IMR-90 (cell line): ENCODE measurements at regions of chr4 and their contacts with region 1.

Region 1: GRCh38 chr4:138919094-138919936 is 96.3 kb upstream of the NOCT start:
- DNase-seq: peak; percentile 82
- ATAC-seq: peak; percentile 100
- H3K4me3 ChIP-seq: no peak overlapping the region
- H3K27ac ChIP-seq: no peak overlapping the region
- H3K4me1 ChIP-seq: no peaks in the 10 kb centered on the region
- H3K27me3 ChIP-seq: peaks cover 2% of the 10 kb centered on the region; the same call in 1 of the 2 replicates
- CTCF ChIP-seq: peak; percentile 84
- POLR2A ChIP-seq: 0 out of 2 replicates have a peak, but pooled peaks have one; percentile 25
- RAD21 ChIP-seq: peak; percentile 93

Region 2: GRCh38 chr4:138090150-138090917 is 829.0 kb before region 1 on chr4:
- CTCF ChIA-PET with region 1: no interaction called
- POLR2A ChIA-PET with region 1: no interaction called
- dilution Hi-C with region 1: no loop called
- in situ Hi-C with region 1: no loop called
- intact Hi-C with region 1: loop called (anchors 10 kb)
- DNase-seq: peak; percentile 83
- ATAC-seq: peak; percentile 96
- H3K4me3 ChIP-seq: peak overlapping the region; percentile 34
- H3K27ac ChIP-seq: peak overlapping the region; percentile 57
- H3K4me1 ChIP-seq: 0 out of 2 replicates have a peak, but pooled peaks cover 2% of the 10 kb centered on the region
- H3K27me3 ChIP-seq: no peaks in the 10 kb centered on the region
- CTCF ChIP-seq: peak; percentile 87
- POLR2A ChIP-seq: no peak
- RAD21 ChIP-seq: peak; percentile 93

Region 3: GRCh38 chr4:138576684-138577083 is 342.6 kb before region 1 on chr4:
- CTCF ChIA-PET with region 1: no interaction called
- POLR2A ChIA-PET with region 1: no interaction called
- dilution Hi-C with region 1: no loop called
- in situ Hi-C with region 1: no loop called
- intact Hi-C with region 1: loop called (anchors 2 kb)
- DNase-seq: peak; percentile 68
- ATAC-seq: peak; percentile 82
- H3K4me3 ChIP-seq: no peak overlapping the region
- H3K27ac ChIP-seq: no peak overlapping the region
- H3K4me1 ChIP-seq: no peaks in the 10 kb centered on the region
- H3K27me3 ChIP-seq: no peaks in the 10 kb centered on the region
- CTCF ChIP-seq: peak; percentile 55
- POLR2A ChIP-seq: no peak
- RAD21 ChIP-seq: peak; percentile 82